Natural killer cell (primary cell): ENCODE measurements at regions of chr9 and their contacts with region 1.

Region 1: GRCh38 chr9:127698985-127699670 is 7.7 kb upstream of the CFAP157 start:
- DNase-seq: peak; percentile 89 to 92
- ATAC-seq: peak; percentile 97 to 99 (median 98)
- H3K4me3 ChIP-seq: peak overlapping the region; percentile 25
- H3K4me3 Mint-ChIP-seq: peak overlapping the region; percentile 72
- H3K27ac ChIP-seq: peak overlapping the region; percentile 73
- H3K27ac Mint-ChIP-seq: peak overlapping the region; percentile 84 to 97
- H3K4me1 ChIP-seq: peaks cover 13% of the 10 kb centered on the region
- H3K4me1 Mint-ChIP-seq: peaks cover 8 to 15% of the 10 kb centered on the region in 2 donors
- H3K27me3 ChIP-seq: no peaks in the 10 kb centered on the region
- H3K27me3 Mint-ChIP-seq: no peaks in the 10 kb centered on the region
- CTCF ChIP-seq: no peak

Region 2: DNA sequence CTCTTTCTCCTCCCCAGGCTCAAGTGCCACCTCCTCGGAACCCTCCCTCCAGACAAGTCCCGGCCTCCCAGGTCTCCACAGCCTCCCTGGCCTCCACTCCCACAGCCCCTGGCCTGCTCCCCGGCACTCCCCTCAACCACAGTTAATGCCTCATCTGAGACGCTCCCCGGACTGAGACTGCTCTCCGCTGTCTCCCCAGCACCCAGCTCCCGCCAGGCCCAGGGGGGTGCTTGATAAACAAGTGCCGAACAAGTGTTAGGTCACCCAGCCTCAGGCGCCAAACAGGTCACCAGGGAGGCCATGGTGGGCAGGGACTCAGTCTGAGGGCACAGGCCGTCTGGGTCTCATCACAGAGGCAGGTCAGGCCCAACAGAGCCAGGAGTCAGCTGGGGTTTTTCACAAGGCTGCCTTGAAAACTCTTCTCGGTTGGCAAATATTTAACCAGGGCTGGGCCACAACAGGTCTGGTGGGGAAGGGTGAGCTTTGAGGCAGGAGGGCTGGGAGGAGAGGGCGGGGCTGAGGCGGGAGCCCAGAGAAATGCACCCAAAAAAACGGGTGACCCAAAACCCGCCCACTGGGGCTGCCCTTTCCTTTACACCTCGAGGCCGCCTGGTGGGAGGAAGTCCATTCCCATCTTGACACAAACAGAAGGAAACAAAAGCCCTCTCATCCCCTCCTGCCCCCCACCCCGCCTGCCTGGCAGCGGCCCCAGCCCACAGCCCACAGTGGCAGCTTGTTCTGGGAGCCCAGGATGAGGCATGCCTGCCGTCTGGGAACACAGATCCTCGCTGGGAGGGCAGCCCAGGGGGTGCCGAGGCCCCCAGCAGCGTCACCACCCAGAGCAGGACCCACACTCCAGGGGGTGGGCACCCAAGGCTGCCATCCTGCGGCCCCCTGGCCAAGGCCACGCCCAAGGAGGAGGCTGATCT is 153.7 kb before region 1 on chr9:
- intact Hi-C with region 1: no loop called
- DNase-seq: no peak
- ATAC-seq: no peak
- H3K4me3 ChIP-seq: no peak overlapping the region
- H3K4me3 Mint-ChIP-seq: no peak overlapping the region
- H3K27ac ChIP-seq: no peak overlapping the region
- H3K27ac Mint-ChIP-seq: peak overlapping the region in 1 of 2 donors; percentile 33
- H3K4me1 ChIP-seq: peaks cover 12% of the 10 kb centered on the region
- H3K4me1 Mint-ChIP-seq: peaks cover 0 to 18% of the 10 kb centered on the region in 2 donors
- H3K27me3 ChIP-seq: no peaks in the 10 kb centered on the region
- H3K27me3 Mint-ChIP-seq: peaks cover 0 to 6% of the 10 kb centered on the region in 2 donors
- CTCF ChIP-seq: no peak

Region 3: GRCh38 chr9:127715394-127716337 is 16.5 kb after region 1 on chr9 and contains the starts of genes PTRH1 and TTC16:
- intact Hi-C with region 1: loop called (anchors 1 kb)
- DNase-seq: peak; percentile 98
- ATAC-seq: peak; percentile 92 to 96 (median 93)
- H3K4me3 ChIP-seq: peak within 1 kb of the TSS; percentile 80
- H3K4me3 Mint-ChIP-seq: peak within 1 kb of the TSS; percentile 99
- H3K27ac ChIP-seq: peak within 1 kb of the TSS; percentile 54
- H3K27ac Mint-ChIP-seq: peak within 1 kb of the TSS; percentile 93 to 94
- H3K4me1 ChIP-seq: peaks cover 65% of the 10 kb centered on the region
- H3K4me1 Mint-ChIP-seq: peaks cover 35 to 40% of the 10 kb centered on the region in 2 donors
- H3K27me3 ChIP-seq: no peaks in the 10 kb centered on the region
- H3K27me3 Mint-ChIP-seq: no peaks in the 10 kb centered on the region
- CTCF ChIP-seq: no peak
- total RNA-seq, gene PTRH1: 6.9 to 11.5 (median 11.0) TPM
- total RNA-seq, gene TTC16: 15.5 to 23.0 (median 21.5) TPM

Region 4: GRCh38 chr9:127742435-127743088 is 43.4 kb after region 1 on chr9:
- intact Hi-C with region 1: no loop called
- DNase-seq: no peak
- ATAC-seq: no peak
- H3K4me3 ChIP-seq: no peak overlapping the region
- H3K4me3 Mint-ChIP-seq: no peak overlapping the region
- H3K27ac ChIP-seq: no peak overlapping the region
- H3K27ac Mint-ChIP-seq: peak overlapping the region; percentile 64 to 67
- H3K4me1 ChIP-seq: peaks cover 14% of the 10 kb centered on the region
- H3K4me1 Mint-ChIP-seq: peaks cover 7% of the 10 kb centered on the region in 2 donors
- H3K27me3 ChIP-seq: no peaks in the 10 kb centered on the region
- H3K27me3 Mint-ChIP-seq: no peaks in the 10 kb centered on the region
- CTCF ChIP-seq: no peak

Region 5: GRCh38 chr9:129177791-129178559 is 1478.8 kb after region 1 on chr9 and contains the start of gene IER5L:
- intact Hi-C with region 1: no loop called
- DNase-seq: peak; percentile 94 to 95
- ATAC-seq: peak; percentile 89 to 95 (median 92)
- H3K4me3 ChIP-seq: peak within 1 kb of the TSS; percentile 76
- H3K4me3 Mint-ChIP-seq: peak within 1 kb of the TSS; percentile 91
- H3K27ac ChIP-seq: no peak within 1 kb of the TSS
- H3K27ac Mint-ChIP-seq: peak within 1 kb of the TSS in 1 of 2 donors; percentile 83
- H3K4me1 ChIP-seq: peaks cover 42% of the 10 kb centered on the region
- H3K4me1 Mint-ChIP-seq: peaks cover 6 to 37% of the 10 kb centered on the region in 2 donors
- H3K27me3 ChIP-seq: peaks cover 13% of the 10 kb centered on the region
- H3K27me3 Mint-ChIP-seq: peaks cover 5 to 7% of the 10 kb centered on the region in 2 donors
- CTCF ChIP-seq: no peak
- total RNA-seq, gene IER5L: 1.4 to 3.9 (median 2.8) TPM